ENCODE measurements at regions of chr4 and their contacts with region 1.

Region 1: GRCh38 chr4:17810260-17811077 is at the starts of genes DCAF16 and NCAPG:
- DNase-seq: peak; percentile 99 to 100 (median 99)
- ATAC-seq: peak; percentile 100
- H3K4me3 ChIP-seq: peak within 1 kb of the TSS; percentile 72
- H3K27ac ChIP-seq: peak within 1 kb of the TSS; percentile 84
- H3K4me1 ChIP-seq: peaks cover 2% of the 10 kb centered on the region
- H3K27me3 ChIP-seq: no peaks in the 10 kb centered on the region
- total RNA-seq, gene DCAF16: 15.5 to 21.7 (median 18.3) TPM
- total RNA-seq, gene NCAPG: 0.17 to 1.3 (median 0.64) TPM

Region 2: DNA sequence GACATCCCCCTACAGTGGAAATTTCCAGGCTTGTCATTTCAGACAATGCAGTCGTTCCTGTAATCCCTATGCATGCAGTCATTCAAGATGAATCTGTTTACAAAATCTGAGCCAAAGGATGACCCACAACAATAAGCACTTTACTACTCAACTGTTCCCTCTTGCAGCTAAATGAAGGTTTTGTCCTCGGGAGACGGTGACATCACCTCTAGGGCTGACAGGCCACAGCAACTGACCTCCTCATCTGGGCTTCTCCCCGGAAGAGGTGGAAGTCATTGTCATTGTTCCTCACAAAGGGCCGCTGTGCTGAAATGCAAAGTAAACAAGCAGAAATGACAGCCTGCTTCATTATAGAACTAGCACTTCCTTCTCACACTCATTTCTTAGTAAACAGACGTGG is 266.3 kb before region 1 on chr4:
- intact Hi-C with region 1: no loop called
- DNase-seq: no peak
- ATAC-seq: no peak
- H3K4me3 ChIP-seq: no peak overlapping the region
- H3K27ac ChIP-seq: no peak overlapping the region
- H3K4me1 ChIP-seq: no peaks in the 10 kb centered on the region
- H3K27me3 ChIP-seq: no peaks in the 10 kb centered on the region

Region 3: DNA sequence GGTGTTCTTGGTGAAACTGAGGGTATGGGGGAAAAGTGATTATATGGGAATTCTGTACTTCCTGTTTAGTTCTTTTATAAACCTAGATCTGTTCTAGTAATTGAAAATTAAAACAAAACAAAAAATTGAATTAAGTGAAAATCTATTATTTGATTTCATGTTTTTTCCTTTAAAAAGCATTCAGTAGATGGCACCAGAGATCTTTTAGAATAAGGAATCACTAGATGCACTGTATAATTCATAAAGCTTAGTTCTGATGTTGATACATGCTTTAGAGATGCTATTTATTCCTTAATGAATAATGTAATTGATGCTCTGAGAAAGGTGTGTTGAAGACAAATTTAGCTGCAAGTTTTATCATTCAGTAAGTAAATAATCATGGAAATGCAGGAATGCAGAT is 123.8 kb after region 1 on chr4:
- intact Hi-C with region 1: no loop called
- DNase-seq: no peak
- ATAC-seq: no peak
- H3K4me3 ChIP-seq: no peak overlapping the region
- H3K27ac ChIP-seq: no peak overlapping the region
- H3K4me1 ChIP-seq: no peaks in the 10 kb centered on the region
- H3K27me3 ChIP-seq: no peaks in the 10 kb centered on the region

Region 4: DNA sequence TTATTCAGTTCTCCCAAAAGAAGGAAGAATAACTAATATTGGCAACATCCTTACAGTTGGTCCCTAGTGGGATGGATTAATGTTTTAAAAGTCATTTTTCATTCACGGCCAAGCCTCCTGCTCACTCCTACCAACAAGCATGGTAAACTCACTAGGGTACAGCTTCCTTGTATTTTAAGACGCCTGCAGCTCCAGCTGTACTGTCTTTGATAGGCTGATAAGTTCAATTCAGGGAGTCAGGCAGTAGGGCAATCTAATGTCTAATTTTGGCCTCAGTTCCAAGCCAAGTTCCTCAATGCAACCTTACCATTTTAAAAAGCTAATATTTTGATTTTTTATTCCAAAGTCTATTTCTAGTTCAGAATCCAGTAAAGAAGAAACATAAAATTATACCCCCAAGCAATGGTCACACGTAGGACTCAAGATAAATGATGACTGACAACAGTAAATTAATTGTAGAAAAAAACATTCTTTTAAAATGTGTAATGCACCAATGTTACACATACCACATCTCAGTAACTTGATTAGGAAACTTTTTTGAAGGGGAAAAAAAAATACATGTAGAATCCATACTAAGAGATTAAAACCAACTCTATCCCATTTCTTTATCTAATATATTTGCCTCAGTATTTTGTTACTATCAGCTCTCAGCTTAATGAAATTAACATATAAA is 201.8 kb after region 1 on chr4:
- intact Hi-C with region 1: loop called in 1 of 4 experiments (anchors 10 kb)
- DNase-seq: no peak
- ATAC-seq: peak in 1 of 2 donors; percentile 22
- H3K4me3 ChIP-seq: no peak overlapping the region
- H3K27ac ChIP-seq: no peak overlapping the region
- H3K4me1 ChIP-seq: peaks cover 4% of the 10 kb centered on the region
- H3K27me3 ChIP-seq: no peaks in the 10 kb centered on the region

Region 5: GRCh38 chr4:18021722-18022571 is 211.5 kb after region 1 on chr4 and contains the start of gene LCORL:
- intact Hi-C with region 1: loop called in 2 of 4 experiments (anchors 10 kb)
- DNase-seq: peak; percentile 94 to 97 (median 96)
- ATAC-seq: peak; percentile 96
- H3K4me3 ChIP-seq: peak within 1 kb of the TSS; percentile 96
- H3K27ac ChIP-seq: peak within 1 kb of the TSS; percentile 90
- H3K4me1 ChIP-seq: peaks cover 3% of the 10 kb centered on the region
- H3K27me3 ChIP-seq: no peaks in the 10 kb centered on the region
- total RNA-seq, gene LCORL: 7.2 to 8.1 (median 7.5) TPM

Region 6: GRCh38 chr4:18366892-18367291 is 556.4 kb after region 1 on chr4:
- intact Hi-C with region 1: loop called in 1 of 4 experiments (anchors 10 kb)
- DNase-seq: no peak
- ATAC-seq: peak in 1 of 2 donors; percentile 57
- H3K4me3 ChIP-seq: no peak overlapping the region
- H3K27ac ChIP-seq: no peak overlapping the region
- H3K4me1 ChIP-seq: no peaks in the 10 kb centered on the region
- H3K27me3 ChIP-seq: no peaks in the 10 kb centered on the region